ENCODE measurements at regions of chr2 and their contacts with region 1.

Region 1: GRCh38 chr2:204277226-204277625 is 268.0 kb upstream of the PARD3B start:
- DNase-seq: no peak
- H3K4me3 ChIP-seq: no peak overlapping the region
- H3K27ac ChIP-seq: no peak overlapping the region
- H3K4me1 ChIP-seq: no peaks in the 10 kb centered on the region
- H3K27me3 ChIP-seq: peaks cover 0 to 2% (median 0%) of the 10 kb centered on the region in 5 experiments

Region 2: DNA sequence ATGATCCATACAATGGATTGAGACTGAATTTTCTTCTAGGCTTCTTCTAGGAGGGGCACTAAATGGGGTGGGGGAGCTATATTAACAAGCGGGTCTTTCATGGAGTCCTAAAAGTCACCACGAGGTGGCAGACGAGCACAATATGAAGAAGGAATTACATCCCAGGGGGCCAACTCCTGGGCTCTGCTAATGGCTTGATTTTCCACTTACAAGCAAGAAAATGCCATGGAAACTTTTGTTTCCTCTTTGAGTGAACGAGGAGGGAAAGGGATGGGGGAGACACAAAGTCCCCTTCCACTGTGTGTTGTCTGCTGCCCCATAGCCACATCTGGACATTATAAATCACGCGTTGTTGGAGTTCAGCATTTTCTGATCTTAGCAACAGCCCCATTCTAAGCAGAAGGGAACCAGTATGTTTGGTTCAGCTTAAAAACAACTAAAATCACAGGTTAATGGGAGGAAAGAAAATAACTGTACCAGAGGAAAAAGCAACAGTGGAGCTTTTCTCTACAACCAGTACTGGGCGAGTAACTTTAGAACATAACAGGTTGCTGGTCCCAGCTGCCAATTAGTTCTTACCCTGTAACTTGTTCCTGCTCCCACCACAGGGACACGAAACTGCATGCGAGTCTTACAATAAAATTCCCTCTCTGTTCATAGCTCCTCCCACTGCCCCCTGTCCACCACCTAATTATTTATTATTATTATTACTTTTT is 16.9 kb before region 1 on chr2:
- CTCF ChIA-PET with region 1: interaction called, 11 read pairs
- POLR2A ChIA-PET with region 1: no interaction called
- DNase-seq: peak; percentile 71 to 80 (median 73)
- H3K4me3 ChIP-seq: no peak overlapping the region
- H3K27ac ChIP-seq: no peak overlapping the region
- H3K4me1 ChIP-seq: peaks cover 0 to 20% (median 13%) of the 10 kb centered on the region in 4 experiments
- H3K27me3 ChIP-seq: peaks cover 0 to 4% (median 0%) of the 10 kb centered on the region in 5 experiments

Region 3: GRCh38 chr2:204298404-204298803 is 21.2 kb after region 1 on chr2:
- CTCF ChIA-PET with region 1: no interaction called
- POLR2A ChIA-PET with region 1: no interaction called
- DNase-seq: no peak
- H3K4me3 ChIP-seq: no peak overlapping the region
- H3K27ac ChIP-seq: no peak overlapping the region
- H3K4me1 ChIP-seq: no peaks in the 10 kb centered on the region
- H3K27me3 ChIP-seq: no peaks in the 10 kb centered on the region

Measured in common myeloid progenitor, CD34-positive (primary cell).